ENCODE measurements at regions of chr11 and their contacts with region 1.

Region 1: DNA sequence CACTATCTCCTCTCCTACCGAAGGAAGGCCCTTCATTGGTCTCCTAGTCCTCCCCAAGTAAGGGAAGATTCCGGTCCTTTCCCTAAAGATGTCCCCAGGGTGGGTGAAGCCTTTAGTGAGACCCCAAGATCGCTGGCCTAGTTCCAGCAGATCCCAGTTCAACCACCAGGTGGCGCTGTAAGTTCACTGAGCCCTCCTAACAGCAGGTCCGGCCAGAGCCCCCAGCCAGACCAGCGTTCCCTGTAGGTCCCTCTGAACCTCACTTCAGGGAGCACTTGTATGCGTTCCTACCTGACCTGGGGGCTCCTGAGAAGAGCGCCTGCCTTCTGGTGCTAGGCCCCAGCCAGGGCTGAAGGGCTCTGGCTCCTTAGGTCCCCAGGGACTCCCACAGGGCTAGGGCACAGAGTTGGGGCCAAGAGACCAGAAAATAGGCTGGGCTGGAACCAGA is 38.1 kb downstream of the LMO1 start:
- DNase-seq: peak; percentile 86

Region 2: GRCh38 chr11:8263769-8264410 is 38.3 kb after region 1 on chr11 and contains the start of gene LMO1:
- intact Hi-C with region 1: loop called in 1 of 2 experiments (anchors 5 kb)
- DNase-seq: peak; percentile 95
- total RNA-seq, gene LMO1: 0.38 TPM in 1 of 2 donors, not detected in the other

Region 3: GRCh38 chr11:8320076-8320475 is 94.5 kb after region 1 on chr11:
- intact Hi-C with region 1: loop called in 1 of 2 experiments (anchors 1 kb)
- DNase-seq: peak; percentile 78

Region 4: DNA sequence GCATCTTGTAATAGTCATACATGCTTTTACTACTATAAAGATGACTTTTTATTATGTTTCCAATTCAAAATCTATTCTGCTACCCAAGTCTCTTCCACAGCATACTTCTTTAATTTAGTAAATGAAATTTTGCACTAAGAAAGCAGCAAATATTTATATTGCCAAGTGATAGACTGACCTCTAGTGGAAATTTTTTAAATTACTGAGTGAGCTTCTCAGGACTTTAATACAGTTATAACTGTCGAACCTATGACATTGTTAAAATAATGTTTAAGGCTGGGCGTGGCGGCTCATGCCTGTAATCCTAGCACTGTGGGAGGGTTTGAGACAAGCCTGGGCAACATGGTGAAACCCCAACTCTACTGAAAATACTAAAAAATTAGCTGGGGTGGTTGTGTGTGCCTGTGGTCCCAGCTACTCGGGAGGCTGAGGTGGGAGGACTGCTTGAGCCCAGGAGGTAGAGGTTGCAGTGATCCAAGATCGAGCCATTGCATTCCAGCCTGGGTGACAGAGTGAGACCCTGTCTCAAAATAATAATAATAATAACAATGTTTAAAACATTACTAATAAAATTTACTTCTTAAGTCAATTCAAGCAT is 341.1 kb after region 1 on chr11:
- intact Hi-C with region 1: loop called (anchors 5 to 10 kb)
- DNase-seq: no peak

Region 5: DNA sequence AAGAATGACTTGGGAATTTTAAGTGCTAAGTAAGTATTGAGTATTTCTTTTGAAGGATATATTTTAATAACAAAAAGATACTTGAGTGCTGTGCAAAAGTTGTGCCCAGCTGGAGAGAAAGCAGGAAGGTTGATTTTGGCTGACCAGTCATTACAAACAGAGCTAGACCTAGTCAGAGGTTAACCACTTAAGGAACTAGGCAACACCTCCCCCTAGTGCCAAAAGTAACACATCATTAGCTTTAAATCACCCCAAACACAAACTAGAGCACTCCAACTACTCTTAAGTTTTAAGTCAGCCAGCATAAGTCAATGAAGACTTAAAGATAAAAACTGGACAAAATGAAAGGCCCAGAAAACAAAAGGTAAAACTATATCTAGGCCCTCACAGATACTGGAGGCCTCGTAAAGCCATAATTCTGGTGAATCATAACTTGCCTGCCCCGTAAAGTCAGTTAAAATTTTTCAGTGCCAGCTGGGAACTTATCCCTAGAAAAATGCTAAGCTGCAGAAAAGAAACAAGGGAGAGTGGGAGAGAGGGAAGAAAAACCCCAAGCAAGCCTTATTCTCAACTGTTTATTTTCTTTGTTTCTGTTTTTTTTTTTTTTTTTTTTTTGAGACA is 734.0 kb after region 1 on chr11:
- intact Hi-C with region 1: loop called in 1 of 2 experiments (anchors 10 kb)
- DNase-seq: no peak